Mammary epithelial cell (primary cell): ENCODE measurements at regions of chr19 and their contacts with region 1.

Region 1: GRCh38 chr19:55503502-55504251 is 15.4 kb downstream of the SSC5D start:
- DNase-seq: peak; percentile 84
- H3K4me3 ChIP-seq: peak overlapping the region; percentile 41 to 46 (median 42)
- H3K27ac ChIP-seq: no peak overlapping the region
- H3K4me1 ChIP-seq: peaks cover 9% of the 10 kb centered on the region
- H3K27me3 ChIP-seq: no peaks in the 10 kb centered on the region
- CTCF ChIP-seq: peak; percentile 78 to 96

Region 2: GRCh38 chr19:55289117-55289796 is 214.4 kb before region 1 on chr19:
- CTCF ChIA-PET with region 1: no interaction called
- dilution Hi-C with region 1: loop called (anchors 10 kb)
- in situ Hi-C with region 1: no loop called
- intact Hi-C with region 1: loop called (anchors 5 kb)
- DNase-seq: no peak
- H3K4me3 ChIP-seq: no peak overlapping the region
- H3K27ac ChIP-seq: no peak overlapping the region
- H3K4me1 ChIP-seq: no peaks in the 10 kb centered on the region
- H3K27me3 ChIP-seq: no peaks in the 10 kb centered on the region
- CTCF ChIP-seq: no peak

Region 3: DNA sequence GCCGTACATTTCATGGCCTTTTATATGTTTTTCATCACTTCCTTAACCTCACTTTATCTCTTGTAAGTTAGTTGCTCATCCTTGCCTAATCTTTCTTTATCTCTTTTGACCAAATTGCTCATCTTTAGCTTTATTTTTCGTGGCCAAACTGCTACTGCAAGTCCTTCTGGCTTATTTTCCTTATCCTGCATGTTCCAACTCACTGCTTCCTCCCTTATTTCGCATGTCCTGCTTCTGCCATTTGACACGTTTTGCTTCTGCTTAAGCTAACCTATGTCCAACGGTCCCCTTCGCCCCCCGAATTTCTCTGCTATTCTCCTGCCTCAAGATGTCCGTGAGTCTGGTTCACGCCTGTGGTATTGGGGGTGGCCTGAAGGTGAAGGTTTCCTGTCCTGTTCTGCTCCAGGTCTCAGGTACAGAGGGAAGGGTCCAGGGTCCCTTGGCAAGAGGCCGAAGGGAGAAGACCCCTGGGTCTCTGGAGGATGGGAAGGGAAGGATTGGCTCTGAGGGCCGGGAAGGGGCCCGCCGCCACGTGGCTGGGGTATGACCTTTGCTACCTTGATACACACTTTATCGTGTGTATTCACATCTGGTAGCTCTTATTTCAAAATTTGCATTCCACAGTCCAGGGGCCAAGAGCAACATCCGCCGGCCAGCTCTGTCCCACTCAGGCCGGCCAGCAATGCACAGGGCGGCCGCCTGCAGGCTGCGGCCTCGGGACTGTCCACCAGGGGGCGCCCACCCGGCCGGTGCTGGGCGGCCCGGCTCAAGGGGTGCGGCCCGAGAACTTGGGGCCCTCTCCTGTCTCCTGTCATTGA is 36.2 kb before region 1 on chr19:
- CTCF ChIA-PET with region 1: interaction called, 9 read pairs
- dilution Hi-C with region 1: no loop called
- in situ Hi-C with region 1: no loop called
- intact Hi-C with region 1: loop called (anchors 1 kb)
- DNase-seq: peak; percentile 38
- H3K4me3 ChIP-seq: no peak overlapping the region
- H3K27ac ChIP-seq: no peak overlapping the region
- H3K4me1 ChIP-seq: no peaks in the 10 kb centered on the region
- H3K27me3 ChIP-seq: no peaks in the 10 kb centered on the region
- CTCF ChIP-seq: peak; percentile 77 to 97

Region 4: GRCh38 chr19:55484593-55485438 is 18.9 kb before region 1 on chr19 and contains the start of gene NAT14:
- CTCF ChIA-PET with region 1: no interaction called
- dilution Hi-C with region 1: no loop called
- in situ Hi-C with region 1: no loop called
- intact Hi-C with region 1: no loop called
- DNase-seq: peak; percentile 25
- H3K4me3 ChIP-seq: peak within 1 kb of the TSS; percentile 62 to 81 (median 64)
- H3K27ac ChIP-seq: peak within 1 kb of the TSS; percentile 66
- H3K4me1 ChIP-seq: peaks cover 15% of the 10 kb centered on the region
- H3K27me3 ChIP-seq: no peaks in the 10 kb centered on the region
- CTCF ChIP-seq: no peak
- total RNA-seq, gene NAT14: 5.0 to 26.3 TPM

Region 5: DNA sequence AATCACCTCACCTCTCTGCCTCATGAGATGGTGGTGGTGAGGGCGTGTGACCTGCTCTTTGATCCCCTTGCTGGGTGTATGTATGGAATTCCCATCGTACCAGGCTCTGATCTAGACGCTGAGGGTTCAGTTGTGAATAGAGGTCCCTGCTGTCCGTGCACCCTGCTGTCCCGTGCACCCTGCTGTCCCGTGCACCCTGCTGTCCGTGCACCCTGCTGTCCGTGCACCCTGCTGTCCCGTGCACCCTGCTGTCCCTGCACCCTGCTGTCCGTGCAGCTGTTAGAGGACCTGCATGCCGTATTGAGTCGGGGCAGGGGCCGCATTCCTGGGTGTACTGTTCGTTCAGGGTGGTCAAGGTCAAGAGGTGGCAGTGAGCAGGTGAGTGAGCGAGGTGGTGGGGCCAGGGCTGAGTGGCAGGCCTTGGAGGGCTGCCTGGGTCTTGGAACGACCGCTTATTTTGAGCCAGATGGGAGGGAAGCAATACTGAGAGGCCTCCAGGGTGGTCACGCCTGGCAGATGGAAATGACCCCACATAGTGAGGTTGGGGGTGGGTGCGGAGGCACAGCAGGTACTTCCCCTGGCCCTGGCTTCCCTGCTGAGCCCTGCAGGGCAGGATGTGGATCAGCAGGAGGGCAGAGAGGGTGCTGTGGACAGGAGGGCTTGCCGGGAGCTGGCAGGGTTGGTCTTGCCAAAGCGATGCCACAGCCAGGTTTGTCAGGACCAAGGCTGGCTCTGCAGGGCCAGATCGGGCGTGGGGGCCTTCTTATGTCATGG is 166.8 kb after region 1 on chr19:
- CTCF ChIA-PET with region 1: no interaction called
- dilution Hi-C with region 1: no loop called
- in situ Hi-C with region 1: no loop called
- intact Hi-C with region 1: no loop called
- DNase-seq: no peak
- H3K4me3 ChIP-seq: no peak overlapping the region
- H3K27ac ChIP-seq: no peak overlapping the region
- H3K4me1 ChIP-seq: peaks cover 15% of the 10 kb centered on the region
- H3K27me3 ChIP-seq: no peaks in the 10 kb centered on the region
- CTCF ChIP-seq: no peak